SK-N-SH (cell line): ENCODE measurements at regions of chr6 and their contacts with region 1.

Region 1: GRCh38 chr6:144582939-144583613 is 297.9 kb downstream of the UTRN start:
- DNase-seq: peak; percentile 32
- H3K4me3 ChIP-seq: peak overlapping the region; percentile 48 to 60
- H3K27ac ChIP-seq: peak overlapping the region in 1 of 2 experiments; percentile 87; a peak in 2 of 4 replicates
- H3K4me1 ChIP-seq: peaks cover 0 to 14% of the 10 kb centered on the region in 2 experiments; a peak in 3 of 4 replicates
- H3K27me3 ChIP-seq: no peaks in the 10 kb centered on the region
- CTCF ChIP-seq: no peak
- EP300 ChIP-seq: peak in 1 of 2 experiments; percentile 39; a peak in 1 of 4 replicates
- RAD21 ChIP-seq: 0 out of 2 replicates have a peak, but pooled peaks have one; percentile 8

Region 2: GRCh38 chr6:144548536-144548935 is 34.5 kb before region 1 on chr6:
- CTCF ChIA-PET with region 1: interaction called, 15 read pairs
- POLR2A ChIA-PET with region 1: no interaction called
- DNase-seq: peak; percentile 12
- H3K4me3 ChIP-seq: no peak overlapping the region
- H3K27ac ChIP-seq: no peak overlapping the region
- H3K4me1 ChIP-seq: no peaks in the 10 kb centered on the region; a peak in 1 of 4 replicates
- H3K27me3 ChIP-seq: no peaks in the 10 kb centered on the region
- CTCF ChIP-seq: peak; percentile 30
- EP300 ChIP-seq: no peak
- RAD21 ChIP-seq: peak; percentile 71

Region 3: DNA sequence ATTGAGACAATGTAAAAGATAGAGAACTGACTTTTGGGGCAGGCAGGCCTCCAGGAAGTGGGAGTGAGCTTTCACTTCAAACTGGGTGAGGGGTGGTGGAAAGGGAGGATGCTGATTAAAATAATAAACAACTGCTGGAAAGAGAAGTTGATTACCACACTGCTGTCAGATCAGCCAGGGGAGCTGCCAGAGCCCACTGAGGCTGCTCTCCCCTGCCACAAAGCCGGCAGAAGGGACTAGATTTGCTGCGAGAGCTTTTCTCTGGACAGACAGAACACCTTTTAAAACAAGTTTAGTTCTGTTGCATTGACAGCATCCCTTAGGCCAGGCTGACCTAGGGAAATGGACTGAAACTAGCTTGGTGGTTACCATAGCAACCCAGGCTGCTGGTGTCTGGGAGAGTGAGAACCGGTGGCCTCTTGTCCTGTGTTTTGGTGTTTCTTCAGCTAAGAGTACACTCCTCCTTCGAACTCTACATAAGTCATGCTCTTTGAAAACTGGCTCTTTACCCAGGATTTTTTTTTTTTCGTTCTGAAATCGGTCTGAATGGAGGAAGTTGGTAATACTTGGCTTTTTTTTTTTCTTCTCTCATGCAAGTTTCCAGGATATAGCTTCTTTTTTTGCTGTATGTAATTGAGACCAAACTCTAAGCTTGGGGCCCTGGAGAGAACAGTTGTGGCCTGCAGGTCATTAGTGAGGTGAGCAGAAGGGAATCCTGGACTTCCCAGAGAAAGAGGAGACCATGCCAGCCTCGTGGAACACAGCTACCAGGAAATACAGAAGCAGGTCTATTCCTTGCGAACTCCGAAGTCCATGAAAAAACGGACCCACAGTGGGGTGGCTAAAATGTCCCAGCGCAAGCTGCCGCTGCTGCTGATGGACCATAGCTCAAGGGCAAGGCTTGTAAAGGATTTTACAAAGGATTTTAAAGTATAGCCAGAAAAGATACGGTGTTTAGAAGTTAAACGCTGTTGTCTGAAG is 76.4 kb after region 1 on chr6:
- CTCF ChIA-PET with region 1: interaction called, 15 read pairs
- POLR2A ChIA-PET with region 1: no interaction called
- DNase-seq: peak; percentile 45
- H3K4me3 ChIP-seq: no peak overlapping the region
- H3K27ac ChIP-seq: peak overlapping the region in 1 of 2 experiments; percentile 58; a peak in 2 of 4 replicates
- H3K4me1 ChIP-seq: peaks cover 0 to 22% of the 10 kb centered on the region in 2 experiments; a peak in 3 of 4 replicates
- H3K27me3 ChIP-seq: no peaks in the 10 kb centered on the region
- CTCF ChIP-seq: no peak
- EP300 ChIP-seq: no peak
- RAD21 ChIP-seq: no peak

Region 4: DNA sequence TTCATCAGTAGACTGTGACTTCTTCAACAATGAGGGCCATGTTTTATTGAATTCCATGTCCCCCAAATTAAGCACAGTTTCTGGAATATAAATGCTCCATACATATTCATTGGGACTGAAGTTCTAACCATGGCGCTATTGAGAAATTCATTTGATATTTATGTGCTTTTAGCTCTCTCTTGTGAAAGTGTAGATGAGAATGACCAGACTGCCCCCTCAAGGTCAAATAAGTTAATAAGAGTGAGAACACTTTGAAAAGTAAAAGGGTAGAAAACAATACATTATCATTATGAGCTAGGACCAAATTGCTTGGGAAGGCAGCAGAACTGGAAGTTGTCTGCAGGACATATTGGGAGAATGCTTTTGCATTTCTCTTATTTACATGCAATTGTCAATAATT is 554.4 kb after region 1 on chr6:
- CTCF ChIA-PET with region 1: interaction called, 11 read pairs
- POLR2A ChIA-PET with region 1: no interaction called
- DNase-seq: no peak
- H3K4me3 ChIP-seq: no peak overlapping the region
- H3K27ac ChIP-seq: no peak overlapping the region
- H3K4me1 ChIP-seq: peaks cover 0 to 13% of the 10 kb centered on the region in 2 experiments; a peak in 3 of 4 replicates
- H3K27me3 ChIP-seq: no peaks in the 10 kb centered on the region
- CTCF ChIP-seq: peak; percentile 46
- EP300 ChIP-seq: no peak
- RAD21 ChIP-seq: peak; percentile 58

Region 5: DNA sequence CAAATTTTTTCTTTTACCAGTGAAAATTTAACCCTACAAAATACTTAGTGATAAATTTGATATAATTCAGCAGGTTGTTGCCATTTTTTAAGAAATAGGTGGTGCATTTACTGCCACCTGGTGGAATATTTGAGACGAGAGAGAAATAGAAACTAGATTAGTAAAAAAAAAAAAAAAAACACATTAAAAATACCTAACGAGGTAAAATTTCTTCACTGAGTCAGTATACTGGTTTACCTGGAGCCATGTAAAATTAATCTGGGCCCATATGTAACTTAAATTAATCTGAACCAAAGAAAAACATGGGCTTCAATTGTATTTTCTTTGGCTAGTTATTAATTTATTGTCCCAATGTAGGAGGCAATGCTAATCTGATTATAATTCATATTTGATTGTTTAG is 631.5 kb after region 1 on chr6:
- CTCF ChIA-PET with region 1: interaction called, 27 read pairs
- POLR2A ChIA-PET with region 1: no interaction called
- DNase-seq: peak; percentile 4
- H3K4me3 ChIP-seq: peak overlapping the region in 1 of 2 experiments; percentile 47; a peak in 1 of 4 replicates
- H3K27ac ChIP-seq: no peak overlapping the region
- H3K4me1 ChIP-seq: no peaks in the 10 kb centered on the region; a peak in 2 of 4 replicates
- H3K27me3 ChIP-seq: no peaks in the 10 kb centered on the region
- CTCF ChIP-seq: peak; percentile 76
- EP300 ChIP-seq: no peak
- RAD21 ChIP-seq: peak; percentile 80

Region 6: DNA sequence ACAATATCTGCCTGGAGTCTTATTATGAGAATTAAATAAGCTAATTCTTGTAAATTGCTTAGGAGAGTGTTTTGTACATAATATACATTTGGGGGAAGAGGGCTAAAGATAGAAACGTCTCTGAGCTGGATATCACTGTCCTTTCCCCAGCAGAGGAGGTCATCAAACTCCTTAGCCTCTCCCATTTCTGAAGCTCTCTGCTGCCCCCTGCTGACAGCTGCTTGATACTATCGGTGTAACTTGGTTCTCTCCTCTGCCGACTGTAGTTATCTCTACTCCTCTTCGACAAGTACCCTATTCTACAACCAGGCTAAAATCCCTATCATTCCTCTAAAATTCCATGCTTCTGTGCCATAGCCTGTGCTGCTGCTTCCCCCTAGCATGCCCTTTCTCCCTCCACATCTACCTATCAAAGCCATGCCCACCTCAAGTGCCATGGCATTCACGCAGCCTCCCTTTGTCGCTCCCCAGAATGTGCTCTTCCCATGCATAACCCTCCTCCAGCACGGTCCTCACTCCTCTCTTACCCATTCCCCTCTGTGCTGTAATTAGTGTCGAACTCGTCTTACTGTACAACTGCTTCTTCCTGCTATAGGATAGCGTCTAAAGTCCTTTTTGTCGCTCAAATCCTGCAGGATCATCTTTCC is 1051.0 kb after region 1 on chr6:
- CTCF ChIA-PET with region 1: interaction called, 75 read pairs
- POLR2A ChIA-PET with region 1: no interaction called
- DNase-seq: peak; percentile 75
- H3K4me3 ChIP-seq: no peak overlapping the region
- H3K27ac ChIP-seq: no peak overlapping the region
- H3K4me1 ChIP-seq: peaks cover 0 to 3% of the 10 kb centered on the region in 2 experiments; a peak in 2 of 4 replicates
- H3K27me3 ChIP-seq: no peaks in the 10 kb centered on the region
- CTCF ChIP-seq: peak; percentile 82
- EP300 ChIP-seq: no peak
- RAD21 ChIP-seq: peak; percentile 92